ENCODE measurements at regions of chr9 and their contacts with region 1.

Region 1: DNA sequence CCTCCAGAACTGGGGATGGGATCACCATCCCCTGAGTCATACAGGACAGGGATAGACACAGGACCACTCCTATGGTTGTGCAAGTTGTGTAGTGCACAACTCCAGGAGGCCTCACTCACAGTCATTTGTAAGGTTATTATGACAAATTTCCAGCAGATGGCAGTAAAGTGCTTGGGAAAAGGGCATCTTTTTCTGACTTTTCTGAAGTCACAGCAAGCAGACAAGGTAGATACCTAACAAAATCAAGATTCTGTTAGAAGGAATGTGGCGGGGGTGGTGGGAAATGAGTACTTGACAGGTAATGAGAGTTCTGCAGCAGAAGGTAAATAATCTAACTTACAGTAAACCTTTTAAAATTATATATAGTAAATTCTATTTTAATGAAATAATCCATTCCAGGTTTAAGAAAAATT is 16.7 kb upstream of the KIF27 start:
- DNase-seq: peak; percentile 32
- H3K4me3 Mint-ChIP-seq: no peak overlapping the region
- H3K27ac Mint-ChIP-seq: no peak overlapping the region
- H3K4me1 Mint-ChIP-seq: peaks cover 4% of the 10 kb centered on the region
- H3K27me3 Mint-ChIP-seq: no peaks in the 10 kb centered on the region

Region 2: DNA sequence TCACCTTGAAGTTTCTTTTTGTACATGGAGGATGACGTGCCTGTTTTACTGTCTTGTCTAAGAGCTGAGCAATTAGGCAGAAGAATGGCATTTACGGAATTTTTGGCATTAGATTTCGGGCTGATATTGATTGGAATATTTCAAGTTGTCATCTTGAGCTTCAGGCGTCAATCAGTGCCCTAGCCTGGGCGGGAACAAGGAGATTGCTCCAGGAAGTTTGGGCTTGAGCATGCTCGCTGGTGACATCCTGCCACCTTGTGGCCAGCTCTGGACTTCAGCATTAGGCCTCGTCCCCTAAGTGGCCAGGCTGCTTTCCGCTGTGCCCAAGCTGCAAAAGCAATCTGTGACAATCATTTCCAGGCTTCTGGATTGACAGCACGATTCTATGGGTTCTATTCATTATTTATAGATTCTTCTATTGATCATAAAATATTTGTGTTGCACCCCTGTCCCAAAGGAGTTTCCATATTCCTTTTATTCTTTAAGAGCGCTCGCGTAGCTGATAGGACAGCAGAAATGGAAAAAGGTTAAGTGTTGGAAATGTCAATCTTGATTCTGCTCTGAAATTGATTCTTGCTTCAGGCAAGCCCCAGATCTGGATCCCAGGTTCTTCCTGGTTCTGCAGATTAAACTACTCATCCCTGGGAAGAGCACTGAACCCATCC is 323.3 kb after region 1 on chr9:
- CTCF ChIA-PET with region 1: interaction called, 24 read pairs
- POLR2A ChIA-PET with region 1: no interaction called
- DNase-seq: peak; percentile 60
- H3K4me3 Mint-ChIP-seq: no peak overlapping the region
- H3K27ac Mint-ChIP-seq: no peak overlapping the region
- H3K4me1 Mint-ChIP-seq: peaks cover 7% of the 10 kb centered on the region
- H3K27me3 Mint-ChIP-seq: peaks cover 5% of the 10 kb centered on the region

Region 3: GRCh38 chr9:84315278-84315877 is 377.5 kb after region 1 on chr9:
- CTCF ChIA-PET with region 1: interaction called, 10 read pairs
- POLR2A ChIA-PET with region 1: no interaction called
- DNase-seq: peak; percentile 60
- H3K4me3 Mint-ChIP-seq: no peak overlapping the region
- H3K27ac Mint-ChIP-seq: no peak overlapping the region
- H3K4me1 Mint-ChIP-seq: peaks cover 2% of the 10 kb centered on the region
- H3K27me3 Mint-ChIP-seq: no peaks in the 10 kb centered on the region